Calu3 (cell line): ENCODE measurements at regions of chr7 and their contacts with region 1.

Region 1: DNA sequence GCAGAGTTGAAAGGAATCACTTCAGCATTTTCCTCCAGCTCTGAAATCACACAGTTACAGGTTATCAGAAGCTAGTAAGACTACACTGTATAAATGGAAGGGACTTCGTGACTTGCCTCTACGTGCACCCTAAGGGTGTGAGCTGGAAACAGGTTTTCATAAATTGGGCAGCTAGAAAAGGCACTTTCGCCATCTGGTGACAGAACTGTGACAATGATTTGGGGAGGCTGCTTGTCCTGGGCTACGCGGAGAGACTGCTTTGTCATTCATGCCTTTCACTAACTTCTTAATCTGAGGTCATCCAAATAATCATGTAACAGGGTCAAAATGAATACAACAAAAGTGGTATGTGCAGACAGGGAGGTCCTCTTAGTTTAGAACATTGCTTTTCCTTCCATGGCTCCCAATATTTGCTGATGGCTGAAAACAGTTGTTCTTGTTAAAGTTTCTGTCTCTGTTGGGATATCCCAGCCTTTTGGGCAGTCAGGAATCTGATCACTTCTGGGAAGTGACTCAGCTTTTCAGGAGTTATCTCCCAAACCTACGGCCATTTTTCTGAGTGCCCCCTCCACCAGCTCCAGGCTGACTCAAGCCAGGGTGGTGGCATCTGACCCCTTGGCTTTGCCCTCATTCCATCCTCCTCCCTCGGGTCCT is 17.8 kb downstream of the VWC2 start:
- DNase-seq: peak; percentile 46
- H3K4me3 Mint-ChIP-seq: no peak overlapping the region
- H3K27ac Mint-ChIP-seq: no peak overlapping the region
- H3K4me1 Mint-ChIP-seq: no peaks in the 10 kb centered on the region
- H3K27me3 Mint-ChIP-seq: no peaks in the 10 kb centered on the region
- CTCF ChIP-seq: peak; percentile 21

Region 2: GRCh38 chr7:49324040-49324439 is 467.2 kb before region 1 on chr7:
- CTCF ChIA-PET with region 1: no interaction called
- intact Hi-C with region 1: no loop called
- DNase-seq: no peak
- H3K4me3 Mint-ChIP-seq: no peak overlapping the region
- H3K27ac Mint-ChIP-seq: no peak overlapping the region
- H3K4me1 Mint-ChIP-seq: no peaks in the 10 kb centered on the region
- H3K27me3 Mint-ChIP-seq: no peaks in the 10 kb centered on the region
- CTCF ChIP-seq: no peak

Region 3: GRCh38 chr7:49483142-49483541 is 308.1 kb before region 1 on chr7:
- CTCF ChIA-PET with region 1: no interaction called
- intact Hi-C with region 1: loop called (anchors 2 kb)
- DNase-seq: no peak
- H3K4me3 Mint-ChIP-seq: no peak overlapping the region
- H3K27ac Mint-ChIP-seq: no peak overlapping the region
- H3K4me1 Mint-ChIP-seq: no peaks in the 10 kb centered on the region
- H3K27me3 Mint-ChIP-seq: no peaks in the 10 kb centered on the region
- CTCF ChIP-seq: no peak

Region 4: GRCh38 chr7:49927631-49928030 is 136.4 kb after region 1 on chr7:
- CTCF ChIA-PET with region 1: no interaction called
- intact Hi-C with region 1: no loop called
- DNase-seq: no peak
- H3K4me3 Mint-ChIP-seq: no peak overlapping the region
- H3K27ac Mint-ChIP-seq: no peak overlapping the region
- H3K4me1 Mint-ChIP-seq: no peaks in the 10 kb centered on the region
- H3K27me3 Mint-ChIP-seq: no peaks in the 10 kb centered on the region
- CTCF ChIP-seq: no peak